ENCODE measurements at regions of chr1 and their contacts with region 1.

Region 1: DNA sequence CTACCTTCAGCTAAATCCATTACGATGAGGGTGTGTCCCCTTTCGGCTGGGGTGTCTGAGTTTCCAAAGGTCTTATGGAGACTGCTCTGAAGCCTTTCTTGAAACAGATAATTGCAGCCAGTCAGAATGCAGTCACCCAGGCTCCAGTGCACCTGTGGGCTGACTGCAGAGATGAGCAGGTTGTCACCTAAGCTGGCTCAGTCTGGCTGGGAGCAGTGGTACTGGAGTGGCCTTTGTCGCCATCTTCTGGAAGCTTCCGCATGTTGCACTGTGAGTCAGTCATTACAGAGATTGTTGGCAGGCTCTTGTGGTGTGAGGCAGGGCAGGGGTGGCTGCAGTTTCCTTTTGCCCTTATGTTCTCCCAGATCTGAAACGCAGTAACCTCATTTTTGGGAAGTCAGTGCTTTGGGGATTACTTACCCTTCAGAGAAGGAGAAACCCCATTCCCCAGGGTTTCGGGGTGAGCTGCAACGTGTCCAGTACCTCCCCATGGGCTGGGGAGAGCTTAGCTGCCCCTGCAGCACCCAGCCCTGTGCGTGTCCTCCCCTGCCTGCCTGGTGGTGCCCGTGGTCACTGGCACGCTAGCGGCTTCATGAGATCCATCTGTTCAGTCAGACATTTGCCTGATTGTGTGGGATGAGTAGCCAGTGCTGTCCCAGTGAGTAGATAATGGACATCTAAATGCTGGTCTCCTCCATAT is 48.0 kb downstream of the SMYD2 start:
- DNase-seq: peak; percentile 87
- ATAC-seq: peak; percentile 95
- H3K4me3 Mint-ChIP-seq: no peak overlapping the region
- H3K27ac Mint-ChIP-seq: no peak overlapping the region
- H3K4me1 Mint-ChIP-seq: peaks cover 2% of the 10 kb centered on the region
- H3K27me3 Mint-ChIP-seq: no peaks in the 10 kb centered on the region
- CTCF ChIP-seq: peak; percentile 85

Region 2: DNA sequence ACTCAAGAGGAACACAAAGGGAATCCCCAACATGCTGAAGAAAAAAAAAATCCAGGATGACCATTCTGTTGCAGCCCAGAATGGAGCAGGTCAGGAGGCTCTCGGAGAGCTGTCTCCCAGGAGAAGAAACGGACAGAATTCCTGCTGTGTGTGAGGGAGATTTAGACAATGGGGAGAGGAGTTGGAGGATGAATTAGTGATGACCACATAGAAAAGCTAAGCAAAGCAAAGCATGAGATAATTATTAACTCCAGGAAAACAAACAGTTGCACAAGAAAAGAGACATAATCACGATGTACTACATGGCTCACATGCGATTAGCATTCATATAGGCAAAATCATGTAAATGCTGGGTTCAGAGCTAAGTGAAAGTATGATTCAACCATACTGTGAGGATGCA is 109.0 kb before region 1 on chr1:
- CTCF ChIA-PET with region 1: interaction called, 73 read pairs
- POLR2A ChIA-PET with region 1: no interaction called
- intact Hi-C with region 1: no loop called
- DNase-seq: no peak
- ATAC-seq: no peak
- H3K4me3 Mint-ChIP-seq: no peak overlapping the region
- H3K27ac Mint-ChIP-seq: no peak overlapping the region
- H3K4me1 Mint-ChIP-seq: no peaks in the 10 kb centered on the region
- H3K27me3 Mint-ChIP-seq: peaks cover 20% of the 10 kb centered on the region
- CTCF ChIP-seq: no peak

Region 3: DNA sequence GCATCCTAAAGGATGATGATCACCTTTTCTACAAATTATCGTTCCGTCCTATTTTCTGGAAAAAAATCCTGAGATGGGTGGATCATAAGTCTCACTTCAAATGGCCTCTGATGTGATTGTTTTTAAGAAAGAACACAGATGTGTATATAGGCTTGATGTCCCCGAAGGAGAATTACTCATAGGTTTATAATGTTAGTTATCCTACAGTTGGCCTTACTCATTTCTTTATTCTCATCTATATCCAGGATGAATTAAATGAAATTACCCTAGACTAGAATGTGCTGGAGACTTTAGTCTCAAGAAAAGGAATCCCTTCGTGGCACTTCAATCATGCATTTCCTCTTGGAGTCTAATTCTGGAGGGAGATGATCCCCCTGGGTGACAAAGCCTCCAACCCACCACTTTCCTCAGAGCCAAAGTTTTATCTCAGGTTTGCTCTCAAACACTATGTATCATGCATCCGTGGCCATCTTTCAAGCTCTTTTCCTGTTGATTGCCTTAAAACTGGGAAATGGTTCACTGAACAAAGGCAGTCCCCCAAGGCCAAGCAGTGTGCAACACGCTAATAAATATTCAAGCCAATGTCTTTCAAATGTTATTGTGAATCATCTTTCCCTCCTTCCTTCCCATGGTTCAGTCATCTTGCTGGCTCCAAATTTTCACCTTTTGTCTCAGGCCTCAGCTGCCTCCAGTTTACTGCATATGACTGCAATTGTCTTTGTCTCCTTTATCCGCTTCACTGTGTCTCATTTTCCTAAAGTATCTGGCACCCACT is 80.4 kb before region 1 on chr1:
- CTCF ChIA-PET with region 1: interaction called, 11 read pairs
- POLR2A ChIA-PET with region 1: no interaction called
- intact Hi-C with region 1: no loop called
- DNase-seq: no peak
- ATAC-seq: no peak
- H3K4me3 Mint-ChIP-seq: no peak overlapping the region
- H3K27ac Mint-ChIP-seq: no peak overlapping the region
- H3K4me1 Mint-ChIP-seq: no peaks in the 10 kb centered on the region
- H3K27me3 Mint-ChIP-seq: peaks cover 15% of the 10 kb centered on the region
- CTCF ChIP-seq: no peak

Region 4: GRCh38 chr1:214281021-214281719 is 47.8 kb before region 1 on chr1 and contains the start of gene SMYD2:
- CTCF ChIA-PET with region 1: interaction called, 16 read pairs
- POLR2A ChIA-PET with region 1: no interaction called
- intact Hi-C with region 1: no loop called
- DNase-seq: peak; percentile 71
- ATAC-seq: peak; percentile 75
- H3K4me3 Mint-ChIP-seq: peak within 1 kb of the TSS; percentile 87
- H3K27ac Mint-ChIP-seq: peak within 1 kb of the TSS; percentile 90
- H3K4me1 Mint-ChIP-seq: peaks cover 35% of the 10 kb centered on the region
- H3K27me3 Mint-ChIP-seq: no peaks in the 10 kb centered on the region
- CTCF ChIP-seq: no peak
- total RNA-seq, gene SMYD2: 37.4 to 40.6 TPM

Region 5: GRCh38 chr1:214310777-214311690 is 17.9 kb before region 1 on chr1:
- CTCF ChIA-PET with region 1: interaction called, 103 read pairs
- POLR2A ChIA-PET with region 1: no interaction called
- intact Hi-C with region 1: no loop called
- DNase-seq: no peak
- ATAC-seq: peak; percentile 45
- H3K4me3 Mint-ChIP-seq: peak overlapping the region; percentile 51
- H3K27ac Mint-ChIP-seq: no peak overlapping the region
- H3K4me1 Mint-ChIP-seq: peaks cover 28% of the 10 kb centered on the region
- H3K27me3 Mint-ChIP-seq: no peaks in the 10 kb centered on the region
- CTCF ChIP-seq: no peak

Region 6: DNA sequence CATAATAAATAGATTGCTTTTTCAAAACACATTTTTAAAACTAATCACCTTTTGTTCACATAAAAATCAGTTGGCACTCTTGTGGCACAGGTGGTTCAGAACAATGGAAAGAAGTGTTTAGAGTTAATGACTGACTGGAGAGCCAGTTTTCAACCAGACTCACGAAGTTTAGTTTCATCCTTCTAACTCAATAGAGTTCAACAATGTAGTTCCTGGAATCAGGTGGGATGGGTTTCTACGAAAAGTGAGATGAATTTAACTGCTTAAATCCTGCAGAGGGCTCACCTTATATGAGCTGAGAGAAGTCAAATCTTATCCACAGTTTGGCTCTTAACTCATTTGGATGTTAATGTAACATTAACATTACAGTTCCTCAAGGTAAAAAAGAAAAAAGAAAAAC is 68.6 kb after region 1 on chr1:
- CTCF ChIA-PET with region 1: no interaction called
- POLR2A ChIA-PET with region 1: no interaction called
- intact Hi-C with region 1: no loop called
- DNase-seq: no peak
- ATAC-seq: peak; percentile 58
- H3K4me3 Mint-ChIP-seq: no peak overlapping the region
- H3K27ac Mint-ChIP-seq: no peak overlapping the region
- H3K4me1 Mint-ChIP-seq: peaks cover 20% of the 10 kb centered on the region
- H3K27me3 Mint-ChIP-seq: no peaks in the 10 kb centered on the region
- CTCF ChIP-seq: no peak

Region 7: DNA sequence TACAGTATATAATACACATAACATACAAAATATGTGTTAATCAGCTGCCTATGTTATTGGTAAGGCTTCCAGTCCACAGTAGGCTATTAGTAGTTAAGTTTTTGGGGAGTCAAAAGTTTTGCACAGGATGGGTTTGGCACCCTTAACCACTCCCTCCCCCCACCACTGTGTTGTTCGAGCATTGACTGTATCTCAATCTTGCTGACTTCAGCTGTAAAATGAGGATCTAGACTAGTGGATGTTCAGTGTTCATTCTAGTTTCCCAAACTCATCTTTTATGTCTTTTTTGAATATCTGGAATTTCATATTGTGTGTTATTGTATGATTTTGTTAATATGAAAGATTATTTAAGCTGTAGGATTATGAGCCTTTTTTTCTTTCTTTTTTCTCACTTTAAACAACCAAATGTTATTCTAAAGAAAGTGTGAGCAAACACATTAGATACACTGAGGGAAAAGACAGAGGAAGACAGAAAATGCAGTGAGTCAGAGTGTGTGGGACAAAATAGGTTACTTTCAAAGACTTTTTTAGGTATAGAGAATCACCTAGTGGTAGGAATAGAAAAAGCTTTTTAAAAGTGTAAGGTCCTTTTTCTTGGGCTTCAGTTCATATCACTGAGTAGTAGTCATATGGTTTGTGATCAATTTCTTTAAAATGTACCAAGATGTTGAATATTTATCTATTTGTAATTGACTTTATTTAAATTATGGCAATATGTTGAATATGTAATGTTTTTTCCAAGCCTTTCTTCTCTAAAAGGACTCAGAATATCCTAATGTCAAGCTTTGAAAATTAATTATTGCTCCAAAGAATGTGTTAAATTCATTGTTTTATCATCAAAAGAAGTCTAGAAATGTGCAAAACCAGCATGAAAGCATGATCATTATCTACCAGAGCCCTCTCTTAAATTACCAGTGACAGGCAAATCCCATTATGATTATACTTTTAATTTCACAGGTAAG is 256.2 kb after region 1 on chr1:
- CTCF ChIA-PET with region 1: interaction called, 119 read pairs
- POLR2A ChIA-PET with region 1: no interaction called
- intact Hi-C with region 1: loop called (anchors 1 kb)
- DNase-seq: no peak
- ATAC-seq: peak; percentile 78
- H3K4me3 Mint-ChIP-seq: no peak overlapping the region
- H3K27ac Mint-ChIP-seq: no peak overlapping the region
- H3K4me1 Mint-ChIP-seq: no peaks in the 10 kb centered on the region
- H3K27me3 Mint-ChIP-seq: peaks cover 6% of the 10 kb centered on the region
- CTCF ChIP-seq: peak; percentile 59

Measured in activated CD8-positive, alpha-beta T cell treated with anti-CD3 and anti-CD28 coated beads for 36 hours (primary cell).